H1 (cell line): ENCODE measurements at regions of chr20 and their contacts with region 1.

Region 1: GRCh38 chr20:51306503-51307358 is 235.8 kb downstream of the NFATC2 start:
- DNase-seq: peak; percentile 65 to 92
- H3K4me3 ChIP-seq: peak overlapping the region in 1 of 4 experiments; percentile 13; a peak in 2 of 8 replicates
- H3K27ac ChIP-seq: no peak overlapping the region
- H3K4me1 ChIP-seq: peaks cover 15 to 35% (median 27%) of the 10 kb centered on the region in 4 experiments
- H3K27me3 ChIP-seq: peaks cover 2 to 16% (median 13%) of the 10 kb centered on the region in 4 experiments; a peak in 5 of 7 replicates
- CTCF ChIP-seq: peak; percentile 93 to 97 (median 97)
- EP300 ChIP-seq: no peak
- POLR2A ChIP-seq: no peak
- RAD21 ChIP-seq: peak; percentile 97 to 99

Region 2: DNA sequence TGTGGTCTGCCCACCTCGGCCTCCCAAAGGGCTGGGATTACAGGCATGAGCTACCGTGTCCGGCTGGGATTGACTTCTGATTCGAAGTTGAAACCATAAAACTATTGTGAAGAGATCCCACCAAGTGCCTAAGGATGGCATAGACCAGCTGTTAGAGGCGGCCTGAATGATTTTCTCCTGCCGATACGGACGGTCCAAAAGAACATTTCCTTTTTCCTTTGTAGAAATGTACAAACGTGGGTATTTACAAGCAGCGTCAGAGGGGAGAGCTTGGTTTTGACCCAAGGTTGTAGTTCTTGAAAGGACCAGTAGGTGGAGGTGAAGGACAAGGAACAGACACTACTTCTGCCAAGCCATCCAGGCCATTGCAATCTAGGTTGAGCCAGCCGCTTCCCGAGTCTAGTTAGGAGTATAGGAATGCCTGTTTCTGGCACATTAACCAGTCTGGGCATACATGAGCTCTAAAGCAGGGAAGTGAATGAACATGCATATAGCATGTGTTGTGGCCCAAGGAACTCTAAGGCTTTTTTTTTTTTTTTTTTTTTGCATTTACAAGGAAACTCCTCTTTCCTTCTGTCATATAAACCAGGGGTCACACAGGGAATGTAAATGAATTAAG is 319.0 kb before region 1 on chr20:
- CTCF ChIA-PET with region 1: interaction called, 245 read pairs
- POLR2A ChIA-PET with region 1: interaction called, 30 read pairs
- DNase-seq: peak in 1 of 2 experiments; percentile 83
- H3K4me3 ChIP-seq: no peak overlapping the region
- H3K27ac ChIP-seq: no peak overlapping the region
- H3K4me1 ChIP-seq: peaks cover 3 to 17% (median 7%) of the 10 kb centered on the region in 4 experiments; a peak in 6 of 7 replicates
- H3K27me3 ChIP-seq: no peaks in the 10 kb centered on the region; a peak in 1 of 7 replicates
- CTCF ChIP-seq: peak; percentile 46 to 93 (median 85)
- EP300 ChIP-seq: no peak
- POLR2A ChIP-seq: no peak
- RAD21 ChIP-seq: peak; percentile 99

Region 3: GRCh38 chr20:51014797-51015722 is 291.7 kb before region 1 on chr20:
- CTCF ChIA-PET with region 1: interaction called, 47 read pairs
- POLR2A ChIA-PET with region 1: no interaction called
- DNase-seq: peak in 1 of 2 experiments; percentile 93
- H3K4me3 ChIP-seq: no peak overlapping the region; a peak in 1 of 8 replicates
- H3K27ac ChIP-seq: no peak overlapping the region
- H3K4me1 ChIP-seq: peaks cover 3 to 19% (median 9%) of the 10 kb centered on the region in 4 experiments
- H3K27me3 ChIP-seq: no peaks in the 10 kb centered on the region
- CTCF ChIP-seq: peak; percentile 76 to 96 (median 93)
- EP300 ChIP-seq: no peak
- POLR2A ChIP-seq: no peak
- RAD21 ChIP-seq: peak; percentile 72 to 75

Region 4: GRCh38 chr20:51042654-51043247 is 264.0 kb before region 1 on chr20:
- CTCF ChIA-PET with region 1: interaction called, 17 read pairs
- POLR2A ChIA-PET with region 1: no interaction called
- DNase-seq: peak in 1 of 2 experiments; percentile 60
- H3K4me3 ChIP-seq: no peak overlapping the region
- H3K27ac ChIP-seq: no peak overlapping the region
- H3K4me1 ChIP-seq: no peaks in the 10 kb centered on the region; a peak in 1 of 7 replicates
- H3K27me3 ChIP-seq: no peaks in the 10 kb centered on the region
- CTCF ChIP-seq: peak; percentile 66 to 69 (median 66)
- EP300 ChIP-seq: no peak
- POLR2A ChIP-seq: no peak
- RAD21 ChIP-seq: peak; percentile 48 to 60

Region 5: GRCh38 chr20:51272401-51272800 is 34.3 kb before region 1 on chr20:
- CTCF ChIA-PET with region 1: interaction called, 21 read pairs
- POLR2A ChIA-PET with region 1: no interaction called
- DNase-seq: no peak
- H3K4me3 ChIP-seq: no peak overlapping the region
- H3K27ac ChIP-seq: no peak overlapping the region
- H3K4me1 ChIP-seq: no peaks in the 10 kb centered on the region
- H3K27me3 ChIP-seq: no peaks in the 10 kb centered on the region
- CTCF ChIP-seq: no peak
- EP300 ChIP-seq: no peak
- POLR2A ChIP-seq: no peak
- RAD21 ChIP-seq: no peak

Region 6: GRCh38 chr20:51326201-51326819 is 19.6 kb after region 1 on chr20:
- CTCF ChIA-PET with region 1: interaction called, 110 read pairs
- POLR2A ChIA-PET with region 1: interaction called, 4 read pairs
- DNase-seq: peak in 1 of 2 experiments; percentile 79
- H3K4me3 ChIP-seq: no peak overlapping the region
- H3K27ac ChIP-seq: no peak overlapping the region
- H3K4me1 ChIP-seq: peaks cover 0 to 4% (median 1%) of the 10 kb centered on the region in 4 experiments; a peak in 3 of 7 replicates
- H3K27me3 ChIP-seq: no peaks in the 10 kb centered on the region; a peak in 1 of 7 replicates
- CTCF ChIP-seq: peak; percentile 74 to 92 (median 74)
- EP300 ChIP-seq: no peak
- POLR2A ChIP-seq: no peak
- RAD21 ChIP-seq: peak; percentile 70 to 83

Region 7: DNA sequence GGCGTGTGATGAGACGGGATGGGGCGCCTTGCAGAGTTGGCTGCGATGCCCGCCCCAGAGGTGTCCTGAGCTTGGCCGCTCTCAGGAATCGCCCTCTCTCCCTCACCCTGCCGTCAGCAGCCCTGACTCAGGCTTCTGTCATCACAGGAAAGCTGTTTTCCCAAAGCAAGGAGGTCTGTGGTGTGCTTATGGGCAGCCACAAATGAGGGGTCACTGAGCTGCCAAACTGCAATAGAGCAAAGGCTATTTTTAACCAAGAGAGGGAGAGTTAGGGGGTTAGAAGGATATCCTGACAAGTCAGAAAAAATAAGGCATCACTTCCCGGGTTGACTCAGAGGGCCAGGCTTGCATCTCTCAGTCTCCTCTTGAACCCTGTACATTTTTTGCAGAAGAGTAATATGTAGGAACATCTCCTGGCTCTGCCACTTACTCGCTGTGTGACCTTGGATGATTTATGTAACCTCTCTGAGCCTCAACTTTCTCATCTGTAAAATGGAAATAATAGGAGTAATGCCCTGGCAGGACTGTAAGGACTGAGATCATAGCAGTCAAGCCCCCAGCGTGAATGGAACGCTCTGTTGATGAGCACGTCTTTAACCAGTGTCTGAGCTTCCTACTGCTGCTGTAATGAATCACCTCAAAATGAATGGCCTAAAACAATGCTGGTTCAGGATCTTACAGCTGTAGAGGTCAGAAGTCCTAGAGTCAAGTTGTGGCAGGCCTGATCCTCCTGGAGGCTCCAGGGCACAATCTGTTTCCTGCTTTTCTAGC is 53.9 kb after region 1 on chr20:
- CTCF ChIA-PET with region 1: no interaction called
- POLR2A ChIA-PET with region 1: no interaction called
- DNase-seq: no peak
- H3K4me3 ChIP-seq: no peak overlapping the region
- H3K27ac ChIP-seq: no peak overlapping the region
- H3K4me1 ChIP-seq: no peaks in the 10 kb centered on the region
- H3K27me3 ChIP-seq: no peaks in the 10 kb centered on the region; a peak in 1 of 7 replicates
- CTCF ChIP-seq: no peak
- EP300 ChIP-seq: no peak
- POLR2A ChIP-seq: no peak
- RAD21 ChIP-seq: no peak

Region 8: GRCh38 chr20:51404298-51405060 is 97.7 kb after region 1 on chr20:
- CTCF ChIA-PET with region 1: no interaction called
- POLR2A ChIA-PET with region 1: no interaction called
- DNase-seq: no peak
- H3K4me3 ChIP-seq: no peak overlapping the region
- H3K27ac ChIP-seq: no peak overlapping the region
- H3K4me1 ChIP-seq: no peaks in the 10 kb centered on the region
- H3K27me3 ChIP-seq: no peaks in the 10 kb centered on the region
- CTCF ChIP-seq: no peak
- EP300 ChIP-seq: no peak
- POLR2A ChIP-seq: no peak
- RAD21 ChIP-seq: no peak

Region 9: GRCh38 chr20:51586005-51586440 is 279.3 kb after region 1 on chr20:
- CTCF ChIA-PET with region 1: no interaction called
- POLR2A ChIA-PET with region 1: no interaction called
- DNase-seq: no peak
- H3K4me3 ChIP-seq: no peak overlapping the region
- H3K27ac ChIP-seq: no peak overlapping the region
- H3K4me1 ChIP-seq: no peaks in the 10 kb centered on the region
- H3K27me3 ChIP-seq: no peaks in the 10 kb centered on the region
- CTCF ChIP-seq: no peak
- EP300 ChIP-seq: no peak
- POLR2A ChIP-seq: no peak
- RAD21 ChIP-seq: no peak